ENCODE measurements at regions of chr21 and their contacts with region 1.

Region 1: DNA sequence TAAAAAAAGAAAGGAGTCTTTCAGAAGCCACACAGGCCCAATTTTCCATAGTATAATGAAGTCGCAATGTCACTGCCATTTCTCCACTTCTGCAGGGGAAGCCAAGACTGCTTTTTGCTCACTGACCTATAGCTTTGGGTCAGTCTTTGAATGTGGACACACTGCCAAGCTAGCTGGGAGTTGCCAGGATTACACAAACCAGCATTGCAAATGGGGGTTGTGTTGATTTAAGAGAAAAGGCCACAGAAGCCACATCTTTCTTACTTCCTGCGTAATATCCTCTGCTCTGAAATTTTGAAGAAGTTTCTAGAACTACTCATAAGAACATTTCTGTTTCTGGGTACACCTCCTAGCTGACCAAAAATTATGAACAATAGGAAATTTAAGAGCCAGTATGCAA is 45.8 kb upstream of the SAMSN1 start:
- DNase-seq: peak in 4 of 9 donors; percentile 6 to 24 (median 11)
- ATAC-seq: peak; percentile 91
- H3K4me3 ChIP-seq: no peak overlapping the region
- H3K4me3 Mint-ChIP-seq: peak overlapping the region in 3 of 10 donors; percentile 3 to 70 (median 22)
- H3K27ac ChIP-seq: no peak overlapping the region
- H3K27ac Mint-ChIP-seq: peak overlapping the region in 4 of 9 donors; percentile 4 to 90 (median 33)
- H3K4me1 ChIP-seq: peaks cover 3 to 11% of the 10 kb centered on the region in 2 donors
- H3K4me1 Mint-ChIP-seq: peaks cover 8 to 43% (median 15%) of the 10 kb centered on the region in 7 donors
- H3K27me3 ChIP-seq: no peaks in the 10 kb centered on the region
- H3K27me3 Mint-ChIP-seq: no peaks in the 10 kb centered on the region

Region 2: GRCh38 chr21:14569868-14570267 is 22.0 kb before region 1 on chr21:
- CTCF ChIA-PET with region 1: interaction called, 3 read pairs
- POLR2A ChIA-PET with region 1: interaction called, 3 read pairs
- intact Hi-C with region 1: loop called in 1 of 2 experiments (anchors 2 kb)
- DNase-seq: no peak
- ATAC-seq: no peak
- H3K4me3 ChIP-seq: no peak overlapping the region
- H3K4me3 Mint-ChIP-seq: no peak overlapping the region
- H3K27ac ChIP-seq: no peak overlapping the region
- H3K27ac Mint-ChIP-seq: peak overlapping the region in 1 of 9 donors; percentile 69
- H3K4me1 ChIP-seq: no peaks in the 10 kb centered on the region
- H3K4me1 Mint-ChIP-seq: peaks cover 0 to 55% (median 1%) of the 10 kb centered on the region in 7 donors
- H3K27me3 ChIP-seq: no peaks in the 10 kb centered on the region
- H3K27me3 Mint-ChIP-seq: no peaks in the 10 kb centered on the region

Region 3: DNA sequence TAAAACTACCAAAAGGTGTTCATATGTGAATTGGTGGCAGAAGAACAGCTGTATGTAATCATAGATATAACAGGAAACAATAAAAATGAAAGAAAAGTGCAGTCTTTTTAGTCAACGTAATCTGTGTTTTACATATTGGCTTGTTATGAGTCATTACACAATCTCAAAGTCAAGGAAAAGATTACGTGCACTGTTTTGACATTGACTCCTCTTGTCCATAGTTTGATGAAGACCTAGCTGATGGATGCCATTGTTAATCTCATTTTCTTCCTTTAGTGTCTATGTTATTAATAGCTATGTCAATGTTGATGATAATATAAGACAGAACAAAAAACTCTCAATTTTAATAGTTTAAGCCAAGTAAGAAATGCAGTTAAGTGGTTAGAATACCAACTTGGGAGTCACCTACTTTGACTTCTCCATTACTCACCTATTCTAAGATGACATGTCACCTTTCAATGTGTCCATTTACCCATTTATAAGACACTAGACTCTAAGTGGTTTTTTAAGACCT is 38.7 kb after region 1 on chr21:
- CTCF ChIA-PET with region 1: no interaction called
- POLR2A ChIA-PET with region 1: no interaction called
- intact Hi-C with region 1: loop called (anchors 2 to 5 kb)
- DNase-seq: peak in 2 of 9 donors; percentile 7 to 10
- ATAC-seq: peak; percentile 41
- H3K4me3 ChIP-seq: no peak overlapping the region
- H3K4me3 Mint-ChIP-seq: peak overlapping the region in 3 of 10 donors; percentile 11 to 30 (median 12)
- H3K27ac ChIP-seq: no peak overlapping the region
- H3K27ac Mint-ChIP-seq: peak overlapping the region in 6 of 9 donors; percentile 20 to 72 (median 46)
- H3K4me1 ChIP-seq: no peaks in the 10 kb centered on the region
- H3K4me1 Mint-ChIP-seq: peaks cover 7 to 34% (median 18%) of the 10 kb centered on the region in 7 donors
- H3K27me3 ChIP-seq: no peaks in the 10 kb centered on the region
- H3K27me3 Mint-ChIP-seq: peaks cover 0 to 7% (median 0%) of the 10 kb centered on the region in 5 donors

Region 4: DNA sequence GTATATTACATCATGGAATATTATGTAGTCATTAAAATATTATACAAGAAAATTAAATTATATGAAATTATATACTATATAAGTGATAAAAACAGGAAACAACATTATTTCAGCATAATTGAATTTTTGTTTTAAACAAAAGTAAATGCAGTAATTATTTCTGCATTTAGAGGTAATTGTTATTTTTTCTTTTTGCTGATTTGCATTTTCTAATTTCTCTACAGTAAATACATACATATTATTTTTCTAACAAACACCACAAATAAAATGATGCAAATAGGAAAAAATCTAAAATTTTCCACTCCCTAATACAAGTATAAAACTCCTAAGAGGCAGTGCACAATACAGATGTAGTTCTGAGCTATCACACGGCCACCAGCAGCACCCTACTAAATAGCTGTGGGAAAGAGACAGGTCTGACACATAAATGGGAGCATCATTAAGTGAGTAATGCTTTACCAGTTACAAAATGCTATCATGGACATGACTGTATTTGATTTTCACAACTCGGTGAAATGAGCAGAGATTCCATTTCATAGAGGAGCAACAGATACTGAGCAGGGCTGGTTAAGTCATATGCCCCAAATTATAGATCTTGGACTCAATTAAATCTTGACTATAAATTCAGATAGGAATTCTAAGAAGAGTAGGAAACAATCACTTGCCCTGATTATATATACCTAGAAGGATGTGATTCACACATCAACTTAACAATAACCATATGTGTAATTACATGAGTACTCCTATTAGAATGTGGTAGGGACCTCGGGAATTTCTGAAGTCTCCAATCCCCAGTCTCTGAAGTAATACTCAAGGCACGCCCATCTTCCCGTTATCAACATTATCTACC is 424.0 kb after region 1 on chr21:
- CTCF ChIA-PET with region 1: no interaction called
- POLR2A ChIA-PET with region 1: no interaction called
- intact Hi-C with region 1: no loop called
- DNase-seq: no peak
- ATAC-seq: no peak
- H3K4me3 ChIP-seq: no peak overlapping the region
- H3K4me3 Mint-ChIP-seq: no peak overlapping the region
- H3K27ac ChIP-seq: no peak overlapping the region
- H3K27ac Mint-ChIP-seq: no peak overlapping the region
- H3K4me1 ChIP-seq: peaks cover 0 to 4% of the 10 kb centered on the region in 2 donors
- H3K4me1 Mint-ChIP-seq: peaks cover under 1 to 47% (median 22%) of the 10 kb centered on the region in 7 donors
- H3K27me3 ChIP-seq: no peaks in the 10 kb centered on the region
- H3K27me3 Mint-ChIP-seq: no peaks in the 10 kb centered on the region

Region 5: DNA sequence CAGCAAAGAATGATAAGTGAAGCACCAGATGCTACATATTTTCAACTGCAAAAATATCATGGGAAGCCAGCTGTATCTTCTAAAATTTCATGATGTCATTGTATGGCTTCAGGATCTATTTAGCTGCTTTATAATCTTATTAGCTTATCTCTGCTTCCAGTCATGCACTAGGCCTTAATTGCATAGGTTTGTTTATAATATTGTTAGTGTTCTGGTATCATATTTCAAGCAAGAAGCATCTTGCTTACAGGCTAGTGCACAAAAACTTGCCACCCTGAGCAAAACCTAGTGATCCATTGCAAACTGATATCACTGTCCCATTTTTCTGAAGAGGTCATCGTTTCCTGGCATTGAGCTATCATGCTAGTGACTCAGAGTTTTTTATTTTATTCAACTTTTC is 488.6 kb after region 1 on chr21:
- CTCF ChIA-PET with region 1: no interaction called
- POLR2A ChIA-PET with region 1: no interaction called
- intact Hi-C with region 1: no loop called
- DNase-seq: no peak
- ATAC-seq: no peak
- H3K4me3 ChIP-seq: no peak overlapping the region
- H3K4me3 Mint-ChIP-seq: no peak overlapping the region
- H3K27ac ChIP-seq: no peak overlapping the region
- H3K27ac Mint-ChIP-seq: no peak overlapping the region
- H3K4me1 ChIP-seq: no peaks in the 10 kb centered on the region
- H3K4me1 Mint-ChIP-seq: no peaks in the 10 kb centered on the region
- H3K27me3 ChIP-seq: no peaks in the 10 kb centered on the region
- H3K27me3 Mint-ChIP-seq: peaks cover 3 to 26% (median 5%) of the 10 kb centered on the region in 5 donors